ENCODE measurements at regions of chr3 and their contacts with region 1.

Region 1: GRCh38 chr3:8622873-8623691 is 21.5 kb downstream of the SSUH2 start:
- DNase-seq: no peak
- H3K4me3 ChIP-seq: peak overlapping the region in 1 of 4 donors; percentile 2
- H3K27ac ChIP-seq: no peak overlapping the region
- H3K4me1 ChIP-seq: peaks cover 9 to 11% (median 10%) of the 10 kb centered on the region in 4 donors
- H3K27me3 ChIP-seq: peaks cover 0 to 6% (median 0%) of the 10 kb centered on the region in 4 donors
- CTCF ChIP-seq: peak; percentile 78 to 89 (median 86)
- EP300 ChIP-seq: no peak
- POLR2A ChIP-seq: no peak

Region 2: DNA sequence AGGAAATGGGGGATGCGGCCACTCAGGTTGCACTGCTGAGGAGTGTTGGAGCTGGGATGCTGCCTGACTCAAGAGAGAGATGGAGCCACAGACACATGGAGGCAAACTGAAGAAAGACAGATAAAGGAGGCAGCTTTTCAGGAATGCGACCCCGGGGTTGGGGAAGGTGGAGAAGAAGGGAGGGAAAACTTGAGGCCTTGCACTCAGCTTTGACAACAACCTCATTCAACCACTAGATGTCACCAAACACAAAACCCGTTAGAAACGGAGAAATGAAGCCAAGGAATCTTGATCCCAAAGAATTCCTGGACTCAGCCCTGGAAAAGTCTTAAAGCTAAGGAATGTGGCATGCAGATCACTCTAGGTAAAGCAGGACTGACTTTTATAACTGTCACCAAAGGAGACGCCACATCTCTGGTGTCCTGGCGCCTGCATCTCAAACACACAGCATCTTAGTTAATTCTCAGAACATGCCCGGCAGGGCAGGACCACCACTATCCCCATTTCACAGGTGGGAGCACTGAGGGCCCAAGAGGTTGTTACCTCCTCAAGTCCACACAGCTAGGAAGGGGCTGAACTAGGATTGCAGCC is 181.0 kb before region 1 on chr3:
- intact Hi-C with region 1: loop called (anchors 2 kb)
- DNase-seq: no peak
- H3K4me3 ChIP-seq: no peak overlapping the region
- H3K27ac ChIP-seq: peak overlapping the region in 3 of 4 donors; percentile 8 to 80 (median 72)
- H3K4me1 ChIP-seq: peaks cover 33 to 46% (median 38%) of the 10 kb centered on the region in 4 donors
- H3K27me3 ChIP-seq: no peaks in the 10 kb centered on the region
- CTCF ChIP-seq: peak; percentile 72 to 86 (median 82)
- EP300 ChIP-seq: no peak
- POLR2A ChIP-seq: no peak

Region 3: DNA sequence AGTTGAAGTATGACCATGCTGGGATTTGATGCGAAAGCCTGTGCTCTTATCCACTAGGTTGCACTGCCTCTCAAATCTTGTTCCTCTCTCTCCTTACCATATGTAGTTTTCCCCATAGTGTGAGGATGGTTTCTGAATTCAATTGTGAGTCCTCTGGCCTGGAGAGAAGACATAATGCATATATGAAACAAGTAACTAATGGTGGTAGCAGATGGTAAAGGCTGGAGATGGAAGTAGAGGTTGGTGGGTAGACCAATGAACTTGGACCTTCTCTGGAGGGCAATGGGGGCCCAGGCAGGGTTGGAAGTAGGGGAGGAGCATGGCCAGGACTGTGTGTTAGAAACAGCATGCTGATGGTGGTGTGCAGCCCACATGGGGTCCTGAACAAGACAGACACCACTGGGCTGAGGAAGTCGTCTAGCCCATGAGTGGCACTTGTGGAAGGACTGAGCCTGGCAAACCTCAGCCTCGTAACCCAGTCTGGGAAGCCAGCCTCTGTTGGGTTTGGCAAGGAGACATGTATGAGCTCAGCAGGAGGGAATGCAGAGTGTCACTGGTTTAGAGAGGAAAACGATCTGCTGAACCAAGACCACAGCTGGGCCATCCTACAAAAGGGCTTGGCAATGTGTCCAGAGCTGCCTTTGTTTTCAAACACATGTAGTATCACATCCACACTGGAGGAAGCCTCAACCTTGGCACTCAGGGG is 140.0 kb before region 1 on chr3:
- intact Hi-C with region 1: no loop called
- DNase-seq: no peak
- H3K4me3 ChIP-seq: no peak overlapping the region
- H3K27ac ChIP-seq: peak overlapping the region; percentile 32 to 66 (median 64)
- H3K4me1 ChIP-seq: peaks cover 22 to 34% (median 26%) of the 10 kb centered on the region in 4 donors
- H3K27me3 ChIP-seq: no peaks in the 10 kb centered on the region
- CTCF ChIP-seq: no peak
- EP300 ChIP-seq: no peak
- POLR2A ChIP-seq: no peak

Region 4: GRCh38 chr3:8741581-8742261 is 118.6 kb after region 1 on chr3:
- intact Hi-C with region 1: no loop called
- DNase-seq: no peak
- H3K4me3 ChIP-seq: no peak overlapping the region
- H3K27ac ChIP-seq: no peak overlapping the region
- H3K4me1 ChIP-seq: peaks cover 7 to 13% (median 10%) of the 10 kb centered on the region in 4 donors
- H3K27me3 ChIP-seq: peaks cover 0 to 29% (median 0%) of the 10 kb centered on the region in 4 donors
- CTCF ChIP-seq: no peak
- EP300 ChIP-seq: no peak
- POLR2A ChIP-seq: no peak

Measured in esophagus muscularis mucosa (tissue), 4 donors.